Tibial artery (tissue), 4 donors: ENCODE measurements at regions of chr20 and their contacts with region 1.

Region 1: GRCh38 chr20:17873410-17874270 is 95.0 kb downstream of the SNX5 start:
- DNase-seq: peak; percentile 91
- H3K4me3 ChIP-seq: peak overlapping the region; percentile 3 to 17
- H3K27ac ChIP-seq: peak overlapping the region; percentile 38 to 47
- H3K4me1 ChIP-seq: peaks cover 4 to 42% (median 33%) of the 10 kb centered on the region in 4 donors
- H3K27me3 ChIP-seq: no peaks in the 10 kb centered on the region
- CTCF ChIP-seq: no peak

Region 2: DNA sequence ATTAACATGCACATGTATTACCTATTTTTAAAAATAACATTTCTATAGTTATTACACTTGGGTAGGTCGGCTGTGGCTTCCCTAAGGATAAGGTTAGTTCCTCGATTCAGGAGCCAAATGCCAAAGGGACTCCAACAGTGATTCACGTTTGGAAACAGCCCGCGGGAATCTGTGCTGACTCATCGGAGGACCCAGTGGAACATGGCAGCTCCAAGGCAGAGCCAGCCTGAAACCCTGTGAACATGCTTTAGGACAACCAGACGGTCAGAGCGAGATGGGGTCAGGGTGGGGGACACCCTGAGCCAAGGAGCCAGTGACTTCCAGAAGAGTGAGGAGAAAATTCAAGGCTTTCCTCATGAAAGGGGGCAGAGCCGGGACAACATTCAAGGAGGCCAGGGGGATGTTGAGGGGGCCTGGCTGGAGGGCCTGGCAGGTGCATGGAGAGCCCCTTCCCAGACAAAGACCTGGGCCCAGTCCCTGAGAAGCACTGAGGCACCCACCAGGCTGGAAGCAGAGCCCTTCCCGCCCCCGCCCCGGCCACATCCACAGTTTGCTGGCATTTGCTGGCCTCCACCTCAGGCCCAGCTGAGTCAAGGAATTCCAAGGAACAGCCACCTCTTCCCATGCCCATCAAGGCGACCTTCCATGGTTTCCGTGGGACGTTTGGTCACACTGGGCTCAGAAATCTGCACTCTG is 38.3 kb before region 1 on chr20:
- intact Hi-C with region 1: loop called (anchors 5 kb)
- DNase-seq: peak; percentile 83 to 86
- H3K4me3 ChIP-seq: no peak overlapping the region
- H3K27ac ChIP-seq: peak overlapping the region; percentile 77 to 80
- H3K4me1 ChIP-seq: peaks cover 6 to 30% (median 18%) of the 10 kb centered on the region in 4 donors
- H3K27me3 ChIP-seq: no peaks in the 10 kb centered on the region
- CTCF ChIP-seq: no peak